Posterior vena cava (tissue), 2 donors: ENCODE measurements at regions of chr15 and their contacts with region 1.

Region 1: DNA sequence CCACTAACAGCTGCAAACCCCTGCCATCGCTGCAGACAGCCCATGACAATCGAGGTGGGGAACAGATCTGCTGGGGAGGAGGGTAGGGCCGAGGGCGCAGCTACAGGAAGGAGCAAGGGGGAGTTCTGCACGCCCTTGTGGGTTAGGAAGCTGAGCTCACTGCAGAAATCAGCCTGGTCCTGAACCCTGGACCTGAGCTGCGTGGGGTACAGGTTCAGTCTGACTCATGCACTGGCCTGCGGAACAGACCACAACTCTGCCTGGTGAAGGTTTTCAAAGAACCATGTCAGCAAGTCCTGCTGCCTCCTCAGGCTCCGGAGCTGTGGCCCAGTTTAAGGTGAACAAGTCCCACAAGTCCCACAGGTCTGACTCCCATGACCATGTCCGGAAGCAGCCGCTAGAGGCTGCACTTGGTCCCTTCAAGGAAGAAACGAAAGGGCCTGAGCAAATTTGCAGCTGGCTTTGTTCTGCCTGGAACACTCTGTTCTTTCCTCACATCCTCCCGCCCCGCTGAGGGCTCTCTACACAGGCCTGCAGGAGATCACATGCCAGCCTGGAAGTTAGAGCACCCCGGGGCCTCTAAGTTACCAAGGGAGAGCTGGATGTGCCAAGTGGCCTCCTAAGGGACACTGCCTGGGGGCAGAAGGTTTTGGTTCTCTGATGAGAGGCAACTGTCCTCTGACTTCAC is 49.4 kb upstream of the AKAP13 start:
- DNase-seq: peak; percentile 95

Region 2: GRCh38 chr15:85354461-85354860 is 23.4 kb after region 1 on chr15:
- intact Hi-C with region 1: no loop called
- DNase-seq: no peak

Region 3: GRCh38 chr15:85412956-85413854 is 82.2 kb after region 1 on chr15:
- intact Hi-C with region 1: loop called in 1 of 2 experiments (anchors 10 kb)
- DNase-seq: peak; percentile 83

Region 4: DNA sequence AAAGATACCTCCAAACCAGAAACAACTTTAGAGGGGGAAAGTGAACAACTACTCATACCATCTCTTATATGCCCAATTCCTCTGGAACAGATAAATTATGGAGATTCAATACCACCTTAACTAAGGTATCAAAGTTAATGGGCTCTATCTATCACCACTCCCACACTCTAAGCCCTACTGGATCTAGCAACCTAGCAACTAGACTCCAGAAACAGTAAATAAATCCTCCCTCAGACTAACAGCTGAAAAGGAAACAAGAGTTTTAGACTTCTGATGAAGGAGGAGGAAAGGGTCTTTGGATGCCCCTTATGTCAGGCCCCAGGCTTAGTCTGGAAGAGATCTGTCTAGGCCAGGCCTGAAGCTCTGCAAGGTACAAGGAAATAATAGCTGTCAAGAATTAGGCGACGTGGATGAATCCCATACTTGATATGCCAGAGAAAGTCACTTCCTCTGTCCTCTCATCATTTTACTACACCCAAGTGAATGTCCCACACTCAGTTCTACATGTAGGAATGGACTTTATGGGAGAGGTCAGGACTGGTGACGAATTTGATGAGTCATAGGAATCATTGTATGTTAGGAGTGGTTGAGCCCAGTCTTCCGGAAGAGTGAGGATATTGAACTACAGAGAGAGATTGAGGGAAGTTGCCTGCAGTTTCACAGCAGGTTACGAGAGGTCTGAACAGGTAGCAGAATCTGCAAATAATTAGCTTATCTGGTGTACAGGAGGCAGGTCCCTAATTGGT is 163.2 kb after region 1 on chr15:
- intact Hi-C with region 1: loop called in 1 of 2 experiments (anchors 10 kb)
- DNase-seq: no peak

Region 5: GRCh38 chr15:85527895-85528294 is 196.8 kb after region 1 on chr15:
- intact Hi-C with region 1: loop called in 1 of 2 experiments (anchors 10 kb)
- DNase-seq: no peak

Region 6: DNA sequence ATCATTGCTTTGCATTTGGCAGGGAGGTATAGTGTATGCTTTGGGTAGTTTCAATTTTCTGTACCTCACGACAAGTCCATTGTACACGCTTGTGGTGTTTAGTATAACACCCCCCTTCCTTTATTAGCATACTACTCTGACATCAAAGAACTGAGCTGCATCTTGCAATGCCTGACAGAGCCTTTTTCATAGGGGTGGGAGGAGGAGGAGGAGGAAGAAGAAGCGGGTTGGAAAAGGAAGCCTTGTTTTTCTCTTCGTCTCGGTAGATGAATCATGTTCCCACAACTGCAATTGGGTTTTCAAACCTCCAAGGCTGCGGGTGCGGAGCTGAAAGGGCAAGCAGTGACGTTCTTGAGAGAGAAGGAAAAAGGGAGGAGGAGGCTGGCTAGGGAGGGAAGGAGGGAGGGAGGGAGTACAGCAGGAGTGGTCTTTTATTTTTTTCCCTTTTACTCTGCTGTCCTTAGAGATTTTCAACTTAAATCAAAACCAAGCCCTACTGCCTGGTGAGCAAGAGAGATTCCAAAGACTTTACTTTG is 288.0 kb after region 1 on chr15:
- intact Hi-C with region 1: no loop called
- DNase-seq: peak; percentile 93